ENCODE measurements at regions of chr9 and their contacts with region 1.

Region 1: DNA sequence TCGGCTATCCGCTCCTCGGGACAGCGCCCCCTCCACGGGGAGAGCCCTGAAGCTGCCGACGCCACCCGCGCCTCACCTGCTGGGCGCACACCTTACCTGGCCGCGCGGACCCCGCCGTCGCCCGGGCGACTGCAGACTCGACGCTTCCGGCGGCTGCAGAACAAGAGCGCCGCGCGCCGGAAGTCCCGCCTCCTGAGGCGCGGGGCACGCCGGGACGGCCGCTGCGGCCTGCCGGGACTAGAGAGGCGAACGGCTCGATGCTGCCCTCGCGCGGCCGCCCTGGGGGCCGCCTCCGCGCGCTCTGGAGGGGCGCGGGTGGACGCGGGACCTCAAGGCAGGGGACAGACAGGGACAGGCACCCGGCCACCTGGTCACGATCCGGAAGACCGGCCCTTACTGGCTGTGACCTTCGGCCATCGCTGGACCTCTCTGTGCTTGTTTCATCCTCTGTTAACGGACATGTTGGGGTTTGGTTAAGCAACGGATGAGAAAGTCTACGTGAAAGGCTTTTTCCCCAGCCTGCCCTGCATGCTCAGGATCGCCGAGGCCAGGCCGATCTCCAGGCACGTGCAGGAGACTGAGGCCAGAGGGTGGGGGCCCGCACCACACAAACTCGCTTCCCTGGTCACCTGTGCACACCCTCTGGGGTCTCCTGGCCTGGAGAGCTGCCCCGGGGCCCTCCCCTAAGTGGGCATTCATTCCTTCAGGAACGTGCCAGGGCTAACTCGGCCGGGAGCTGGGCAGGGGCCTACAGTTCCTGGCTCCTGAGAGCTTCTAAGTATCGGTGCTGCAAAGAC is at the start of gene SNAPC4:
- DNase-seq: peak; percentile 90
- ATAC-seq: peak; percentile 73
- H3K4me3 Mint-ChIP-seq: peak within 1 kb of the TSS; percentile 83
- H3K27ac Mint-ChIP-seq: peak within 1 kb of the TSS; percentile 77
- H3K4me1 Mint-ChIP-seq: peaks cover 56% of the 10 kb centered on the region
- H3K27me3 Mint-ChIP-seq: no peaks in the 10 kb centered on the region
- total RNA-seq, gene SNAPC4: 9.5 to 9.6 TPM

Region 2: DNA sequence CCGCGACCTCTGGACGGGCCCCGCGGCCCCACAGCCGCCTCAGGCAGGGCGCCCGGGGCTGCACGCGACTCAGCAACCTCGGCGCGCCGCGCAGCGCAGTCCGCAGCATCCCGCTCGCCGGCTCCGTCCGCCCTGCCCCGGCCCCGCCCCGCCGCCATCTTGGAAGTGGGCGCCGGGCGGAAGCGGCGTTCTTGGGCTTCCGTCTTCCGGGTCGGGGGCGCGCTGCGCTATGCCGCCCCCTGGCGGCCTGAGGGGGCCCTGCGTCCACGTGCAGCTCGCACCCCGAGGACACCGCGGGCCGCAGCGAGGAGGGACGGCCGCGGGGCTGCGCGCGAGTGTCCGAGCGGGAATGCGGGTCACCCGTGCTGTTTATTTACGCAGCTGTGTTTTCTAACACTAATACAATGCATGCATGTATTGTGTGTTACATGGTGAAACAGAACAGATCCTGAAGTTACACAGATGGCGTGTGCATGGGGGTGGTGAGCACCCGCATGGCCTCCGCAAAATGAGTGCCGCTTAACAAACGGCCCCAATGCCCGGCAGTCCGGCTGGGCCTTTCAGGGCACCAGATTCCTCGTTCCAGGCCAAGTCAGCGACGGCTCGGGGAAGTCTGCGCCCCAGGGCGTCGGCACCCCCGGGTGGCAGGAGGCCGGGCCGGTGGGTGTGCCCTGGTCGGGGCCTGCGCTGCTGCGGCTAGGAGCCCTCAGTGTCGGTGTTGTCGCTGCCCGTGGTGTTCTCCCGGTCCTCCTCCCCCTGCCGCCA is 36.4 kb before region 1 on chr9 and contains the start of gene DNLZ:
- CTCF ChIA-PET with region 1: interaction called, 11 read pairs
- POLR2A ChIA-PET with region 1: interaction called, 8 read pairs
- DNase-seq: peak; percentile 88
- ATAC-seq: peak; percentile 85
- H3K4me3 Mint-ChIP-seq: peak within 1 kb of the TSS; percentile 84
- H3K27ac Mint-ChIP-seq: peak within 1 kb of the TSS; percentile 91
- H3K4me1 Mint-ChIP-seq: peaks cover 12% of the 10 kb centered on the region
- H3K27me3 Mint-ChIP-seq: no peaks in the 10 kb centered on the region
- total RNA-seq, gene DNLZ: 20.4 to 21.6 TPM

Region 3: GRCh38 chr9:136410500-136411287 is 10.5 kb after region 1 on chr9 and contains the starts of genes ENTR1 and PMPCA:
- CTCF ChIA-PET with region 1: interaction called, 14 read pairs
- POLR2A ChIA-PET with region 1: interaction called, 13 read pairs
- DNase-seq: peak; percentile 95
- ATAC-seq: peak; percentile 82
- H3K4me3 Mint-ChIP-seq: peak within 1 kb of the TSS; percentile 92
- H3K27ac Mint-ChIP-seq: peak within 1 kb of the TSS; percentile 94
- H3K4me1 Mint-ChIP-seq: peaks cover 56% of the 10 kb centered on the region
- H3K27me3 Mint-ChIP-seq: no peaks in the 10 kb centered on the region
- total RNA-seq, gene ENTR1: 52.8 to 54.3 TPM
- total RNA-seq, gene PMPCA: 56.5 to 57.5 TPM

Measured in activated CD8-positive, alpha-beta T cell treated with anti-CD3 and anti-CD28 coated beads, Interleukin-2, amount 10 ng/mL, durations not matched to agents 7 days and 5 days (primary cell).